ENCODE measurements at regions of chr3 and their contacts with region 1.

Region 1: GRCh38 chr3:75001330-75001729 is 386.9 kb upstream of the CNTN3 start:
- DNase-seq: peak; percentile 4
- ATAC-seq: no peak
- H3K4me3 ChIP-seq: no peak overlapping the region
- H3K27ac ChIP-seq: no peak overlapping the region
- H3K4me1 ChIP-seq: no peaks in the 10 kb centered on the region
- H3K27me3 ChIP-seq: no peaks in the 10 kb centered on the region
- CTCF ChIP-seq: peak; percentile 48
- POLR2A ChIP-seq: no peak
- RAD21 ChIP-seq: peak; percentile 55

Region 2: DNA sequence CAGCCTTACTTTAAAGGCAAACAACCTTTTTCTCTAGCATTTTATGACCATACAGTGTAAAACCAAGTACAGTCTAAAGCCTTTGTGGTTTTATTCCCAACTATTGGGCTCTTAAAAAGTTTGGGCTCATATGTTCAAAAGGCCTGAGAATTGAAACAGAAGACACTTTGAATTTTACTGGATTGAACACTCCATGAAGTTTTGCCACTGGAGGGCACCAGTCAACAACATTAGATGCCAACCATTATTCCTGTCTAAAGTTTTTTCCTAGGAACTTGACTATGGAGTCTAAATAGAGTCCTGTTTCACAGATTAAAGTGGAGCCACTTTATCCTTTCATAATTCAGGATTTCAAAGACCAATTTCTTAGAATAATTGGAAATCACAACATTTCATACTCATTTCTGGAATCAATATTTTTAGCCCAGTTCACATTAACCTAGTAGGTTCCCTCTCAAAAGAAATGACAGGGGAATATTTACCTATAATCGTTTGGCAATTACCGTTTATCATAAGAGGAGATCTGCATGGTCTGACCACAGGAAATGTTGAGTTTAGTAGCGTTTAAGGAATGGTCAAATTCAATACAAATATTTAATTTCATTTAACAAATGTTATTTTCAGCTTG is 1132.5 kb before region 1 on chr3:
- CTCF ChIA-PET with region 1: interaction called, 3 read pairs
- POLR2A ChIA-PET with region 1: no interaction called
- dilution Hi-C with region 1: no loop called
- in situ Hi-C with region 1: no loop called
- intact Hi-C with region 1: loop called (anchors 5 kb)
- DNase-seq: peak; percentile 38
- ATAC-seq: peak; percentile 80
- H3K4me3 ChIP-seq: no peak overlapping the region
- H3K27ac ChIP-seq: no peak overlapping the region
- H3K4me1 ChIP-seq: no peaks in the 10 kb centered on the region
- H3K27me3 ChIP-seq: 0 out of 2 replicates have a peak, but pooled peaks cover 2% of the 10 kb centered on the region
- CTCF ChIP-seq: peak; percentile 68
- POLR2A ChIP-seq: no peak
- RAD21 ChIP-seq: peak; percentile 66

Region 3: DNA sequence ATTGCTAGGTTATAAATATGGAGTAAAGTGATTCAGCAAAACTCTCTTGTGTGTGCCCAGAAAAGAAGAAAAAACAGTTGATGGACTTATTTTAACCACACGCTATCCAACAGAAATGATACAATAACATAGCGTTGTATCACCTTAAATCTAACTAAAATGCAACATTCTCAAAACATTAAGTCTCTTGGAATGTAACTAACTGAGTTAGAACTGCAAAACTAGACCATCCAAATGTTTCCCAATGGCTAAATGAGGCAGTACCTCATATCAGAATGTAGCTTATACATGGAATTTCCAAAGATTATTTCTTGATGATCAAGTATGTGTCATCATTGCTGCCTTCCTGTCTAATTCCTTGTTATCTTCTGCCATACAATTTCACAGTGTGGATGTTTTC is 574.8 kb before region 1 on chr3:
- CTCF ChIA-PET with region 1: no interaction called
- POLR2A ChIA-PET with region 1: no interaction called
- dilution Hi-C with region 1: no loop called
- in situ Hi-C with region 1: no loop called
- intact Hi-C with region 1: no loop called
- DNase-seq: peak; percentile 84
- ATAC-seq: peak; percentile 90
- H3K4me3 ChIP-seq: no peak overlapping the region
- H3K27ac ChIP-seq: no peak overlapping the region
- H3K4me1 ChIP-seq: no peaks in the 10 kb centered on the region
- H3K27me3 ChIP-seq: no peaks in the 10 kb centered on the region
- CTCF ChIP-seq: no peak
- POLR2A ChIP-seq: no peak
- RAD21 ChIP-seq: no peak

Region 4: GRCh38 chr3:74709951-74710350 is 291.4 kb before region 1 on chr3:
- CTCF ChIA-PET with region 1: no interaction called
- POLR2A ChIA-PET with region 1: no interaction called
- dilution Hi-C with region 1: no loop called
- in situ Hi-C with region 1: no loop called
- intact Hi-C with region 1: loop called (anchors 10 kb)
- DNase-seq: no peak
- ATAC-seq: no peak
- H3K4me3 ChIP-seq: no peak overlapping the region
- H3K27ac ChIP-seq: no peak overlapping the region
- H3K4me1 ChIP-seq: no peaks in the 10 kb centered on the region
- H3K27me3 ChIP-seq: no peaks in the 10 kb centered on the region
- CTCF ChIP-seq: no peak
- POLR2A ChIP-seq: no peak
- RAD21 ChIP-seq: no peak

Region 5: GRCh38 chr3:74897006-74897405 is 104.3 kb before region 1 on chr3:
- CTCF ChIA-PET with region 1: no interaction called
- POLR2A ChIA-PET with region 1: no interaction called
- dilution Hi-C with region 1: no loop called
- in situ Hi-C with region 1: no loop called
- intact Hi-C with region 1: no loop called
- DNase-seq: no peak
- ATAC-seq: peak; percentile 37; the same call in 1 of the 2 replicates
- H3K4me3 ChIP-seq: no peak overlapping the region
- H3K27ac ChIP-seq: no peak overlapping the region
- H3K4me1 ChIP-seq: no peaks in the 10 kb centered on the region
- H3K27me3 ChIP-seq: no peaks in the 10 kb centered on the region
- CTCF ChIP-seq: peak; percentile 34
- POLR2A ChIP-seq: no peak
- RAD21 ChIP-seq: peak; percentile 16; the same call in 1 of the 2 replicates

Measured in IMR-90 (cell line).